ENCODE measurements at regions of chr7 and their contacts with region 1.

Region 1: DNA sequence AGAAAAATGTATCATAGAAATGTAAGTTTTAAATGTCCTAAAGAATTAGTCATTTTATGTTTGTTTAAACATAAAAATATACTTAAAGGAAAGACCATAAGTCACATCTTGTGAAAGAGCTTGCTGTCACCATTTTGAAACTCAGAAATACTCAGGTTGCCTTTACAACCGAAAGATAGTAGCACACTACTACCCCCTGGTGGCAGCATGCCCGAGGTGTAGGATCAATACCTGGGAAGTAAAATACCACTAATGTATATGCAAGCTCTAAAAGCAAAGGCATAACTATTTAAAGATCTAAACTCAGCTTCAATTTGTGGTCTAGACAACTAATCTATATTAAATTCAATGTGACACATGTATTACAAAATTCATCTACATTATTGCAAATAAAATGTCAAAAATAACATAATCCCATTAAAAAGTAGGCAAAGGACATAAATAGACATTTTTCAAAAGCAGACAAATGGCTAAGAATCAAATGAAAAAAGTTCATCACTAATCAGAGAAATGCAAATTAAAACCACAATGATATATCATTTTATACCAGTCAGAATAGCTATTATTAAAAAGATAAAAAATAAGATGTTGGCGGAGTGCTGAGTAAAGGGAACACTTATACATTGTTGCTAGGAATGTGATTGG is 47.7 kb upstream of the FGL2 start:
- DNase-seq: peak; percentile 76
- ATAC-seq: peak; percentile 99
- H3K4me3 ChIP-seq: no peak overlapping the region
- H3K27ac ChIP-seq: no peak overlapping the region
- H3K4me1 ChIP-seq: no peaks in the 10 kb centered on the region
- H3K27me3 ChIP-seq: no peaks in the 10 kb centered on the region
- CTCF ChIP-seq: peak; percentile 77 to 86 (median 81)
- EP300 ChIP-seq: no peak
- POLR2A ChIP-seq: no peak
- RAD21 ChIP-seq: peak; percentile 99

Region 2: GRCh38 chr7:77188731-77189437 is 58.4 kb before region 1 on chr7:
- CTCF ChIA-PET with region 1: interaction called, 6 read pairs
- POLR2A ChIA-PET with region 1: no interaction called
- RAD21 ChIA-PET with region 1: interaction called, 15 read pairs
- SMC1A ChIA-PET with region 1: interaction called, 14 read pairs
- in situ Hi-C with region 1: no loop called
- intact Hi-C with region 1: no loop called
- DNase-seq: no peak
- ATAC-seq: no peak
- H3K4me3 ChIP-seq: no peak overlapping the region
- H3K27ac ChIP-seq: no peak overlapping the region
- H3K4me1 ChIP-seq: peaks cover 11% of the 10 kb centered on the region
- H3K27me3 ChIP-seq: no peaks in the 10 kb centered on the region
- CTCF ChIP-seq: no peak
- EP300 ChIP-seq: no peak
- POLR2A ChIP-seq: no peak
- RAD21 ChIP-seq: no peak

Region 3: DNA sequence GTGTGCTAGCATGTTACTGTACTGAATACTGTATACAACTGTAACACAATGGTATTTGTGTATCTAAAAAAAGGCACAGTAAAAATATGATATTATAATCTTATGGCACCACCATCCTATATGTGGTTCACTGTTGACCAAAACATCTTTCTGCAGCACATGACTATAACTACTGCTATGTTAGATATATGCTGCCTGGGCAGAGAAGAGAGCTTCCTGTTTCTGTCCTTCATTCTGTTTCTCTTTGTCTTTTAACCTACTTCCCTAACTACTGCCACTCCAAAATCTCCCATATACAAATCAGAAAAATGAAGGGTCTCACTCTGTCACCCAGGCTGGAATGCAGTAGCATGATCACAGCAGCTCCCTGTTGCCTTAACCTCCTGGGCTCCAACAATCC is 38.9 kb before region 1 on chr7:
- CTCF ChIA-PET with region 1: interaction called, 67 read pairs
- POLR2A ChIA-PET with region 1: no interaction called
- RAD21 ChIA-PET with region 1: interaction called, 72 read pairs
- SMC1A ChIA-PET with region 1: interaction called, 124 read pairs
- in situ Hi-C with region 1: no loop called
- intact Hi-C with region 1: no loop called
- DNase-seq: no peak
- ATAC-seq: no peak
- H3K4me3 ChIP-seq: no peak overlapping the region
- H3K27ac ChIP-seq: no peak overlapping the region
- H3K4me1 ChIP-seq: peaks cover 12% of the 10 kb centered on the region
- H3K27me3 ChIP-seq: no peaks in the 10 kb centered on the region
- CTCF ChIP-seq: no peak
- EP300 ChIP-seq: no peak
- POLR2A ChIP-seq: no peak
- RAD21 ChIP-seq: no peak

Region 4: GRCh38 chr7:77258014-77258413 is 10.7 kb after region 1 on chr7:
- CTCF ChIA-PET with region 1: interaction called, 12 read pairs
- POLR2A ChIA-PET with region 1: no interaction called
- RAD21 ChIA-PET with region 1: interaction called, 4 read pairs
- SMC1A ChIA-PET with region 1: interaction called, 19 read pairs
- in situ Hi-C with region 1: no loop called
- intact Hi-C with region 1: no loop called
- DNase-seq: no peak
- ATAC-seq: no peak
- H3K4me3 ChIP-seq: no peak overlapping the region
- H3K27ac ChIP-seq: no peak overlapping the region
- H3K4me1 ChIP-seq: no peaks in the 10 kb centered on the region
- H3K27me3 ChIP-seq: no peaks in the 10 kb centered on the region
- CTCF ChIP-seq: no peak
- EP300 ChIP-seq: no peak
- POLR2A ChIP-seq: no peak
- RAD21 ChIP-seq: no peak

Region 5: GRCh38 chr7:77326696-77327628 is 79.6 kb after region 1 on chr7:
- CTCF ChIA-PET with region 1: interaction called, 88 read pairs
- POLR2A ChIA-PET with region 1: interaction called, 9 read pairs
- RAD21 ChIA-PET with region 1: interaction called, 87 read pairs
- SMC1A ChIA-PET with region 1: interaction called, 83 read pairs
- in situ Hi-C with region 1: loop called (anchors 5 kb)
- intact Hi-C with region 1: loop called (anchors 1 kb)
- DNase-seq: no peak
- ATAC-seq: no peak
- H3K4me3 ChIP-seq: no peak overlapping the region
- H3K27ac ChIP-seq: no peak overlapping the region
- H3K4me1 ChIP-seq: peaks cover 42% of the 10 kb centered on the region
- H3K27me3 ChIP-seq: no peaks in the 10 kb centered on the region
- CTCF ChIP-seq: no peak
- EP300 ChIP-seq: no peak
- POLR2A ChIP-seq: no peak
- RAD21 ChIP-seq: no peak

Region 6: GRCh38 chr7:77580762-77581350 is 333.5 kb after region 1 on chr7:
- CTCF ChIA-PET with region 1: no interaction called
- POLR2A ChIA-PET with region 1: no interaction called
- RAD21 ChIA-PET with region 1: no interaction called
- SMC1A ChIA-PET with region 1: no interaction called
- in situ Hi-C with region 1: no loop called
- intact Hi-C with region 1: no loop called
- DNase-seq: no peak
- ATAC-seq: no peak
- H3K4me3 ChIP-seq: no peak overlapping the region
- H3K27ac ChIP-seq: no peak overlapping the region
- H3K4me1 ChIP-seq: no peaks in the 10 kb centered on the region
- H3K27me3 ChIP-seq: no peaks in the 10 kb centered on the region
- CTCF ChIP-seq: no peak
- EP300 ChIP-seq: no peak
- POLR2A ChIP-seq: no peak
- RAD21 ChIP-seq: no peak